B cell (primary cell): ENCODE measurements at regions of chr2 and their contacts with region 1.

Region 1: DNA sequence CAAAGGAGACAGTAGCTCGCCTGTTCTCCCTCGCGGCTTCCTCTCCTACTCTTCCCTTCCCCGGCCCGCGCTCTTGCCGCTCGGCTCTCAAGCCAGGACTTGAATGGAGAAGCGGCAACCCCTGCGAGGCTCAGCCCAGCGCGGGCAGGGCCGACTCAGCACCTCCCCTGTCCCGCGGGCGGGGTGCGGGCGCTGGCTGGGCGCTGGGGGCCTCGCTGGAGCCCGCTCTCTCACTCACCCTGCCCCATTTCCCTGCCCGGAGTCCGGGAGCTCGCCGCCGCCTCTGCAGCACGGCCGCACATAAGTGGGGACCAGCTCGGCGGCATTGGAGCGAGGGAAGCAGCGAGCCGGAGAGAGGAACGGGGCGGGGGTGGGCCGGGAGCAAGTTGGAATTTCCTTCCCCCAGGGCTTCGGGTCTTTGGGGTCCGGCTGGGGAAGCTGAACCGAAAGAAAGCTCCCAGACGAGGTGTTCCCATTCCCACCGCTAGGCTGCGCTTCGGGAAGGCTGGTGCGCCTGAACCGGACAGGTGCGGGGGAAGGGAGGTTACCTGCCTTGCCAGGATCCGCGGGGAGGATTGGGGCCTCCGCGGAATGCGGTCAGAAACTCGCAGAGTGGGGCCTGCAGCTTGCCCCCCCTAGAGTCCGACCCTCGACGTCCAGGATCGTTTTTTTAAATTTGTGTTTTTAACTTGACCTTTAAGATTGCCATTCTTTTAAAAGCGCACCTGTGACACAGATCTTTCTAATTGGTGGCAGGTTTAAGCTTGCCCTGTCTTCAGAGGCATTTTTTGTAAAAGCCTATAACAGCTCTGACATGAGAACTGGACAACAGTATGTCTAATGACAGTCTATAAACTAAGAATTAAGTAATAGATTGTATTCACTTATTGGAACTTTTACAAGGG is at the start of gene COBLL1:
- DNase-seq: peak; percentile 82
- ATAC-seq: peak; percentile 68
- H3K4me3 ChIP-seq: peak within 1 kb of the TSS; percentile 63 to 97 (median 89)
- H3K4me3 Mint-ChIP-seq: peak within 1 kb of the TSS; percentile 98
- H3K27ac ChIP-seq: peak within 1 kb of the TSS; percentile 74 to 83
- H3K27ac Mint-ChIP-seq: peak within 1 kb of the TSS; percentile 97
- H3K4me1 ChIP-seq: peaks cover 13 to 15% of the 10 kb centered on the region in 2 donors
- H3K4me1 Mint-ChIP-seq: peaks cover 37% of the 10 kb centered on the region
- H3K27me3 ChIP-seq: no peaks in the 10 kb centered on the region
- H3K27me3 Mint-ChIP-seq: no peaks in the 10 kb centered on the region
- CTCF ChIP-seq: peak; percentile 77
- total RNA-seq, gene COBLL1: 234 TPM in 2 replicates

Region 2: GRCh38 chr2:163632333-163632732 is 1209.6 kb before region 1 on chr2:
- CTCF ChIA-PET with region 1: no interaction called
- POLR2A ChIA-PET with region 1: no interaction called
- intact Hi-C with region 1: no loop called
- DNase-seq: no peak
- ATAC-seq: no peak
- H3K4me3 ChIP-seq: no peak overlapping the region
- H3K4me3 Mint-ChIP-seq: no peak overlapping the region
- H3K27ac ChIP-seq: no peak overlapping the region
- H3K27ac Mint-ChIP-seq: no peak overlapping the region
- H3K4me1 ChIP-seq: no peaks in the 10 kb centered on the region
- H3K4me1 Mint-ChIP-seq: no peaks in the 10 kb centered on the region
- H3K27me3 ChIP-seq: no peaks in the 10 kb centered on the region
- H3K27me3 Mint-ChIP-seq: no peaks in the 10 kb centered on the region
- CTCF ChIP-seq: no peak

Region 3: DNA sequence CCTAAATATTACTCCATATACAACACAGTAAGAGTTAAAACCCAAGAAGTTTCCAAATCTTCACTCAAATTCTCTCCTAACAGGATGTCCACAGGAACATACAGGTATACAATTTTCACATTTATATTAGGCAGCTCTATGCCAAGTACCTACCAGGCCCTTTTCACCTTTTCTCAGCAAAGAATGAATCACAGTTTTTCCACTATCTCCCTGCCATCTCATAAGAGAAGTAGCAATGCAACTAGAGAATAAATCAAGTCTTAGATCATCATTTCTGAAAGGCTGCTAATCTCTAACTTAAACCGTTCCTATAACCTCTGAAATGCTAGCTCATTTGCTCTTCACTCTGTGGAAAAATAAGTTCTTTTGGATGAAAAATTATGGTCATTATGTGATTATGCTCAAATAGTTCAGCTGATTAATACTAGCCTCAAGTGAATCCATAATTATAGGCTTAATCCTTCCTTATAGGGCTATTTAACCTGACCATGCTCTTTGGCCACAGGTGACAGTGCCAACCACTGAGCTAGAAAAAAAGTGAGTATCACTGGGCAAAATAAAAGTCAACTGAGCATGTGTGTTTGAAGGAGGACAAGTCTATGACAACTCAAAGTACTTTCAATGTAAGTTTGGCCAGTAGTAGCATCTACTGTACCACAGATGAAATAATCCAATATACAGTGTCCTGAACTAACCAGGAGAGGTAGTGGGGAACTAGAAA is 80.1 kb before region 1 on chr2:
- CTCF ChIA-PET with region 1: interaction called, 19 read pairs
- POLR2A ChIA-PET with region 1: interaction called, 7 read pairs
- intact Hi-C with region 1: loop called (anchors 1 kb)
- DNase-seq: peak; percentile 47
- ATAC-seq: peak; percentile 22
- H3K4me3 ChIP-seq: peak overlapping the region in 1 of 5 experiments; percentile 76
- H3K4me3 Mint-ChIP-seq: peak overlapping the region; percentile 94
- H3K27ac ChIP-seq: peak overlapping the region; percentile 79 to 95
- H3K27ac Mint-ChIP-seq: peak overlapping the region; percentile 96
- H3K4me1 ChIP-seq: peaks cover 38 to 48% of the 10 kb centered on the region in 2 donors
- H3K4me1 Mint-ChIP-seq: peaks cover 46% of the 10 kb centered on the region
- H3K27me3 ChIP-seq: no peaks in the 10 kb centered on the region
- H3K27me3 Mint-ChIP-seq: no peaks in the 10 kb centered on the region
- CTCF ChIP-seq: no peak

Region 4: GRCh38 chr2:164826293-164827243 is 15.4 kb before region 1 on chr2:
- CTCF ChIA-PET with region 1: interaction called, 10 read pairs
- POLR2A ChIA-PET with region 1: interaction called, 3 read pairs
- intact Hi-C with region 1: loop called (anchors 2 kb)
- DNase-seq: no peak
- ATAC-seq: peak; percentile 64
- H3K4me3 ChIP-seq: no peak overlapping the region
- H3K4me3 Mint-ChIP-seq: peak overlapping the region; percentile 20
- H3K27ac ChIP-seq: no peak overlapping the region
- H3K27ac Mint-ChIP-seq: peak overlapping the region; percentile 41
- H3K4me1 ChIP-seq: peaks cover 8 to 12% of the 10 kb centered on the region in 2 donors
- H3K4me1 Mint-ChIP-seq: peaks cover 32% of the 10 kb centered on the region
- H3K27me3 ChIP-seq: no peaks in the 10 kb centered on the region
- H3K27me3 Mint-ChIP-seq: no peaks in the 10 kb centered on the region
- CTCF ChIP-seq: no peak

Region 5: DNA sequence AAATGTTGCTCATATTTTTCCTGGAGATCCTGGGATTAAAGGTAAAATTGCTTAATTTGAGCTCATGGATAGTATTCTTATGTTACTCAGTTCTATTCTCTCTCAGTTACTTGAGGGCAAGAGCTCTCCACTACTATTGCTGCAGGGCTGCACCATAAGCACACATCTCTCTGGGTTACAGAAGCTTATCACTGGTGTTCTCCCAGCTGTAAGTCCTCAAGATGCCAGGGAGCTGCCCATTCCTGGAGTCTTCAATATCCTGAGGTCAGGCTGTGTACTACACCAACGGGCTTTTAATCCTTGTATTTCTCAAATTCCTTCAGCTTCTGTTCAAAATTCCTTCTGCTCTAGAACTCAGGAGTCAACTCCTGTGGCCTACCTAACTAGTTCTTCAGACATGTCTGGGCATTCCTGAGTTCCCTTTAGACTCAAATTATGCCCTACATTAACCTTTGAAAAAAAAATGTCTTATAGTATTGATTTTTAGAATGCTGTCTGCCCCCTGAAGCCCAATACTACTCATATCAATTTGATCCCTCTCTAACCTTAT is 17.4 kb after region 1 on chr2:
- CTCF ChIA-PET with region 1: interaction called, 22 read pairs
- POLR2A ChIA-PET with region 1: interaction called, 12 read pairs
- intact Hi-C with region 1: loop called (anchors 2 kb)
- DNase-seq: no peak
- ATAC-seq: no peak
- H3K4me3 ChIP-seq: no peak overlapping the region
- H3K4me3 Mint-ChIP-seq: no peak overlapping the region
- H3K27ac ChIP-seq: no peak overlapping the region
- H3K27ac Mint-ChIP-seq: no peak overlapping the region
- H3K4me1 ChIP-seq: no peaks in the 10 kb centered on the region
- H3K4me1 Mint-ChIP-seq: no peaks in the 10 kb centered on the region
- H3K27me3 ChIP-seq: no peaks in the 10 kb centered on the region
- H3K27me3 Mint-ChIP-seq: no peaks in the 10 kb centered on the region
- CTCF ChIP-seq: no peak

Region 6: GRCh38 chr2:164910101-164910899 is 68.3 kb after region 1 on chr2:
- CTCF ChIA-PET with region 1: interaction called, 41 read pairs
- POLR2A ChIA-PET with region 1: interaction called, 6 read pairs
- intact Hi-C with region 1: loop called (anchors 1 kb)
- DNase-seq: peak; percentile 50
- ATAC-seq: peak; percentile 79
- H3K4me3 ChIP-seq: peak overlapping the region in 1 of 5 experiments; percentile 13
- H3K4me3 Mint-ChIP-seq: peak overlapping the region; percentile 42
- H3K27ac ChIP-seq: peak overlapping the region; percentile 4 to 55
- H3K27ac Mint-ChIP-seq: peak overlapping the region; percentile 73
- H3K4me1 ChIP-seq: peaks cover 23 to 29% of the 10 kb centered on the region in 2 donors
- H3K4me1 Mint-ChIP-seq: peaks cover 36% of the 10 kb centered on the region
- H3K27me3 ChIP-seq: no peaks in the 10 kb centered on the region
- H3K27me3 Mint-ChIP-seq: no peaks in the 10 kb centered on the region
- CTCF ChIP-seq: no peak

Region 7: GRCh38 chr2:165067958-165068757 is 226.2 kb after region 1 on chr2:
- CTCF ChIA-PET with region 1: no interaction called
- POLR2A ChIA-PET with region 1: no interaction called
- intact Hi-C with region 1: no loop called
- DNase-seq: no peak
- ATAC-seq: no peak
- H3K4me3 ChIP-seq: no peak overlapping the region
- H3K4me3 Mint-ChIP-seq: no peak overlapping the region
- H3K27ac ChIP-seq: no peak overlapping the region
- H3K27ac Mint-ChIP-seq: no peak overlapping the region
- H3K4me1 ChIP-seq: no peaks in the 10 kb centered on the region
- H3K4me1 Mint-ChIP-seq: no peaks in the 10 kb centered on the region
- H3K27me3 ChIP-seq: no peaks in the 10 kb centered on the region
- H3K27me3 Mint-ChIP-seq: no peaks in the 10 kb centered on the region
- CTCF ChIP-seq: no peak

Region 8: DNA sequence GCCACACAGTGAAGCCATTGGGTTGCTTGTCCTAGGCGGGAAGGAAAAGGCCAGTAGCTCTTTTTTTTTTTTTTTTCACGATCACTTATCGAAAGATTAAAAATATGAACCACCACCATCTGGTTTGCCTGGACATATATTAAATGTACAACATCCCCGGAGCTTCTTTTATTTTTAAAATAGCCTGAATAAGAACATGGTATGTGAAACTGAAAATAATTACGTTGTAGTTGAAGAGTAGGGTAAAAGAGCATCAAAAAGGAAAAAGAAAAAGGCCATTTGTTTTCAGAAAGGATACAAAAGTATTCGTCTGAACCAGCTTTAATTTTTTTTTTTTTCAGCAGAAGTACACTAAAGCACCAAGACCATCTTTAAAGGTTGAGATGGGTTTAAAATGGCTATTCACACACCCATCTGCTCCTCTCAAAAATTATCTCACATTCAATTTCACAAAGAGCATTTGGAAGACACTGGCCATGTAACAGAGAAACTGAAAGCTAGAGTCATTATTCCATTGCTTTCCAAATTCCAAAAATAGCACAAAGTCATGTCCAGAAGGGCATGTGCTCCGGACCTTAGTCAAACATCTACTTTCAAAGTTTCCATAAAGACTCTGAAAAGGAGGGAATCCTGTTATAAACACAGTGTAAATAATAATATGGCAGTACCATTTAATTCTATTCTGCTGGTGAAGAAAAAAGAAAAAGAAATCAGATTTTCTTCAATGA is 278.9 kb after region 1 on chr2:
- CTCF ChIA-PET with region 1: no interaction called
- POLR2A ChIA-PET with region 1: no interaction called
- intact Hi-C with region 1: no loop called
- DNase-seq: no peak
- ATAC-seq: no peak
- H3K4me3 ChIP-seq: no peak overlapping the region
- H3K4me3 Mint-ChIP-seq: no peak overlapping the region
- H3K27ac ChIP-seq: no peak overlapping the region
- H3K27ac Mint-ChIP-seq: no peak overlapping the region
- H3K4me1 ChIP-seq: no peaks in the 10 kb centered on the region
- H3K4me1 Mint-ChIP-seq: no peaks in the 10 kb centered on the region
- H3K27me3 ChIP-seq: no peaks in the 10 kb centered on the region
- H3K27me3 Mint-ChIP-seq: no peaks in the 10 kb centered on the region
- CTCF ChIP-seq: no peak

Region 9: DNA sequence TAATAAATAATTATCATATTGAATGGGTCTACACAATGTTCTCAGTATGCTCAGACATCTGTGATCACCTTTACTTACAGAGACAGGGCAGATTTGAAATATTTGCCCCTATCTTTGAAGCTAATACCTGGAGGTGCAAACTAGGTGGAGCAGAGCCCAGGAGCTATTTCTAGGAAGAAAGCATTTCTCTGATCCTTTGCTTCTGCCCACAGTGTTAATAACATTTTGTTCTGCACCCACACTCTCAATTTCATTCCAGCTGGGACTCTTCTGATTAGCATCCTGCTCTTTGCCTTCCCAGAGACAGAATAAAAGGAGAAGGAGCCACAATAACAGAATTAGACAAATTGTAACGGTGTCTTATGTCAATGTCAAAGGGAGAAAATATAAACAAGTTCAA is 385.6 kb after region 1 on chr2:
- CTCF ChIA-PET with region 1: no interaction called
- POLR2A ChIA-PET with region 1: no interaction called
- intact Hi-C with region 1: no loop called
- DNase-seq: no peak
- ATAC-seq: no peak
- H3K4me3 ChIP-seq: no peak overlapping the region
- H3K4me3 Mint-ChIP-seq: no peak overlapping the region
- H3K27ac ChIP-seq: no peak overlapping the region
- H3K27ac Mint-ChIP-seq: no peak overlapping the region
- H3K4me1 ChIP-seq: no peaks in the 10 kb centered on the region
- H3K4me1 Mint-ChIP-seq: no peaks in the 10 kb centered on the region
- H3K27me3 ChIP-seq: no peaks in the 10 kb centered on the region
- H3K27me3 Mint-ChIP-seq: peaks cover 4% of the 10 kb centered on the region
- CTCF ChIP-seq: no peak

Region 10: GRCh38 chr2:165953655-165954606 is 1112.0 kb after region 1 on chr2 and contains the start of gene TTC21B:
- CTCF ChIA-PET with region 1: no interaction called
- POLR2A ChIA-PET with region 1: no interaction called
- intact Hi-C with region 1: loop called (anchors 2 kb)
- DNase-seq: peak; percentile 93
- ATAC-seq: peak; percentile 96
- H3K4me3 ChIP-seq: peak within 1 kb of the TSS; percentile 62 to 82 (median 71)
- H3K4me3 Mint-ChIP-seq: peak within 1 kb of the TSS; percentile 53
- H3K27ac ChIP-seq: peak within 1 kb of the TSS; percentile 77
- H3K27ac Mint-ChIP-seq: no peak within 1 kb of the TSS
- H3K4me1 ChIP-seq: peaks cover 19 to 23% of the 10 kb centered on the region in 2 donors
- H3K4me1 Mint-ChIP-seq: peaks cover 12% of the 10 kb centered on the region
- H3K27me3 ChIP-seq: no peaks in the 10 kb centered on the region
- H3K27me3 Mint-ChIP-seq: no peaks in the 10 kb centered on the region
- CTCF ChIP-seq: peak; percentile 90
- total RNA-seq, gene TTC21B: 41.5 and 50.7 TPM in 2 replicates